CD4-positive, alpha-beta memory T cell (primary cell): ENCODE measurements at regions of chr3 and their contacts with region 1.

Region 1: GRCh38 chr3:37974121-37975083 is 16.2 kb upstream of the VILL start:
- DNase-seq: peak; percentile 62 to 73 (median 69)
- H3K4me3 ChIP-seq: no peak overlapping the region
- H3K4me3 Mint-ChIP-seq: no peak overlapping the region
- H3K27ac ChIP-seq: no peak overlapping the region
- H3K27ac Mint-ChIP-seq: peak overlapping the region in 3 of 7 donors; percentile 59 to 84 (median 81)
- H3K4me1 ChIP-seq: no peaks in the 10 kb centered on the region
- H3K4me1 Mint-ChIP-seq: peaks cover 3 to 5% (median 4%) of the 10 kb centered on the region in 4 donors
- H3K27me3 ChIP-seq: no peaks in the 10 kb centered on the region
- H3K27me3 Mint-ChIP-seq: peaks cover 0 to 2% of the 10 kb centered on the region in 2 donors

Region 2: DNA sequence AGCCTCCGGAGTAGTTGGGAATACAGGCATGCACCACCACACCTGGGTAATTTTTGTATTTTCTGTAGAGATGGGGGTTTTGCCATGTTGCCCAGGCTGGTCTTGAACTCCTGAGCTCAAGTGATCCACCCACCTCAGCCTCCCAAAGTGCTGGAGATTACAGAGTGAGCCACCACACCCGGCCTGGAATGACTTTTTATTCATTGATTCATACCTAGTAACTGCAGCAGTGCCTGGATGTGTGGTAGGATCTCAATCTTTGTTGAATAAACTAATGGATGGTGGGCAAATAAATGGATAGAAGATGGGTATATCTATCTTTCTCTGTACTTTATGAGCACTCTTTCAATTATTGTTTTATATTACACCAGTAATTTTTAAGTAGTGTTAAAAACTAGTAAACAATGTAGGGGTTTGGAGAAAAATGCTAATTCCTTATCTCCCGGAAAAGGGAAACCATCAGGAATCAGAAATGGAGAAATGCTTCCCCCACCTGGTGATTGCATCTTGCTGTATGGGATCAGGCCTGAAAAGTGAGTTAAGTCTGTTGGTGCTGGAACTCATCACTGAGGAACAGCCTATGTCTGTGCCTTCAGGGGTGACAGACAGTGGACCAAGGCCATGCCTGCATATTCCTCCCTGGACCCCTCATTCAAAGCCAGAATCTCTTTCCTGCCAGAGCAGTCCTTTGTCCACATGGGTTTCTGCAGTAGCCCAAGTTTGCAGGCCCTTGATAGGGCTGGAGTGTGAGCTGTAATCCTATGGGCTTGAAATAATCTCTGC is 273.7 kb before region 1 on chr3:
- CTCF ChIA-PET with region 1: no interaction called
- POLR2A ChIA-PET with region 1: no interaction called
- intact Hi-C with region 1: no loop called
- DNase-seq: no peak
- H3K4me3 ChIP-seq: no peak overlapping the region
- H3K4me3 Mint-ChIP-seq: no peak overlapping the region
- H3K27ac ChIP-seq: no peak overlapping the region
- H3K27ac Mint-ChIP-seq: no peak overlapping the region
- H3K4me1 ChIP-seq: no peaks in the 10 kb centered on the region
- H3K4me1 Mint-ChIP-seq: no peaks in the 10 kb centered on the region
- H3K27me3 ChIP-seq: no peaks in the 10 kb centered on the region
- H3K27me3 Mint-ChIP-seq: peaks cover 11 to 12% of the 10 kb centered on the region in 2 donors

Region 3: DNA sequence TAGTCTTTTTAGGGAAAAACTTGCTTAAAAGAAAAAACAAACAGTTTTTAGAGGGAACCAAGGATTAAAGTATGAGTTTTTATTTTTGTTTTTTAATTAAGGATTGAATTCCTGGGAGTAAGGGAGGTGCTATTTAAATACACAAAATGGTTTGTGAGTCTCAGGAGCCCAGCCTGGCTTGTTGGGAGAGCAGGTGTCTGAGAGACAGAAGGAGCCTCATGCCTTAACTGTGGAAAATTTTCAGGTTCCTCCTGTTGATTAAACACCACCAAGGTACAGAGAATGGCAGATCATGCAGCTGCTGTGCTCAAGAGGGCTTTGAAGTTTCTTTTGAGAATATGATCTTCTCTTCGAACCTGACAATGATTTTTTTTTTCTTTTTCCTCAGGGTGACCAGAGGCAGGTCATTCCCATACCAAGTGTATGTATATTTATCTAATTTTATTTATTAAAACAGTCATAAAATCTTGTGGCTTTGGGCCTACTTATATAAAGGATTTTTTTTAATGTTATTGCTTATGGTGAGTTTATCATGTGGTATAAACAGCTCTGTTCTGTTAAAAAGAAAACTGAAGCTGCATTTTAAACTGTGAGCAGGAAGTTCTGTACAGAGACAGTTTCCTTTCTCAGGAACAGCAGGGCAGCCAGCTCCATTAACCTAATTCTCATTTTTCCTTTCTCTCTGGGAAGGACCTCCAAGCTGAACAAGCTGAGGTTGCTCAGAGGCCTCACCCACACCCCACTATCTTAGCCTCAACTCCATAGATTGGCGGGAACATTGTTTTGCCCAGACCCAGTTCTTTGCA is 17.5 kb before region 1 on chr3:
- CTCF ChIA-PET with region 1: interaction called, 59 read pairs
- POLR2A ChIA-PET with region 1: no interaction called
- intact Hi-C with region 1: no loop called
- DNase-seq: peak in 2 of 5 donors; percentile 5 to 10
- H3K4me3 ChIP-seq: no peak overlapping the region
- H3K4me3 Mint-ChIP-seq: peak overlapping the region in 5 of 8 donors; percentile 21 to 69 (median 52)
- H3K27ac ChIP-seq: no peak overlapping the region
- H3K27ac Mint-ChIP-seq: peak overlapping the region; percentile 68 to 93 (median 88)
- H3K4me1 ChIP-seq: peaks cover 15% of the 10 kb centered on the region
- H3K4me1 Mint-ChIP-seq: peaks cover 13 to 30% (median 19%) of the 10 kb centered on the region in 4 donors
- H3K27me3 ChIP-seq: no peaks in the 10 kb centered on the region
- H3K27me3 Mint-ChIP-seq: no peaks in the 10 kb centered on the region

Region 4: DNA sequence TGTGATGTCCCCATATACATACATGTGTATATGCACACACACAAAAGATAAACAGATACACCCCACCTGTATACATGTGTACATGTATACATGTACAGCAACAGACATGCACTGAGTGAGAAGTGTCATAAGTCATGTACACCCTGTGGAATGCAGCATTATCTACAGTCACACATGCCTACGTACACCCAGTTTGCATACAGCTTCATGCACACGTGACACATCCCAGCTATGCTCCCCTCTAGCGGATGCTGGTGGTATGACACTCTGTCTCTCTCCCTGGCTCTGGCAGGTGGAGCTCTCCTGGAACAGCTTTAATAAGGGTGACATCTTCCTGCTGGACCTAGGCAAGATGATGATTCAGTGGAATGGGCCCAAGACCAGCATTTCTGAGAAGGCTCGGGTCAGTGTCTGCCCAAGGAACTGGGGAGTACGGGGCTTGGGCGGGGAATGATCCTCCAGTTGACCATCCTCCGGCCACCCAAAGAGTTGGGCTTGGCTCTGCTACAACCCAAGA is 22.4 kb after region 1 on chr3:
- CTCF ChIA-PET with region 1: interaction called, 146 read pairs
- POLR2A ChIA-PET with region 1: interaction called, 14 read pairs
- intact Hi-C with region 1: no loop called
- DNase-seq: peak; percentile 80 to 85 (median 82)
- H3K4me3 ChIP-seq: no peak overlapping the region
- H3K4me3 Mint-ChIP-seq: peak overlapping the region; percentile 45 to 97 (median 68)
- H3K27ac ChIP-seq: peak overlapping the region; percentile 29
- H3K27ac Mint-ChIP-seq: peak overlapping the region; percentile 87 to 98 (median 96)
- H3K4me1 ChIP-seq: peaks cover 60% of the 10 kb centered on the region
- H3K4me1 Mint-ChIP-seq: peaks cover 53 to 78% (median 63%) of the 10 kb centered on the region in 4 donors
- H3K27me3 ChIP-seq: no peaks in the 10 kb centered on the region
- H3K27me3 Mint-ChIP-seq: no peaks in the 10 kb centered on the region

Region 5: GRCh38 chr3:38039101-38039898 is 64.9 kb after region 1 on chr3 and contains the start of gene DLEC1:
- CTCF ChIA-PET with region 1: interaction called, 29 read pairs
- POLR2A ChIA-PET with region 1: interaction called, 7 read pairs
- intact Hi-C with region 1: loop called (anchors 1 kb)
- DNase-seq: peak; percentile 88 to 93 (median 91)
- H3K4me3 ChIP-seq: peak within 1 kb of the TSS; percentile 44 to 78
- H3K4me3 Mint-ChIP-seq: peak within 1 kb of the TSS; percentile 57 to 94 (median 85)
- H3K27ac ChIP-seq: peak within 1 kb of the TSS; percentile 85
- H3K27ac Mint-ChIP-seq: peak within 1 kb of the TSS; percentile 90 to 99 (median 97)
- H3K4me1 ChIP-seq: peaks cover 38% of the 10 kb centered on the region
- H3K4me1 Mint-ChIP-seq: peaks cover 23 to 45% (median 32%) of the 10 kb centered on the region in 4 donors
- H3K27me3 ChIP-seq: no peaks in the 10 kb centered on the region
- H3K27me3 Mint-ChIP-seq: no peaks in the 10 kb centered on the region
- total RNA-seq, gene DLEC1: 13.2 to 15.1 TPM

Region 6: GRCh38 chr3:38297947-38298711 is 323.7 kb after region 1 on chr3:
- CTCF ChIA-PET with region 1: interaction called, 18 read pairs
- POLR2A ChIA-PET with region 1: no interaction called
- intact Hi-C with region 1: no loop called
- DNase-seq: peak in 2 of 5 donors; percentile 6 to 11
- H3K4me3 ChIP-seq: no peak overlapping the region
- H3K4me3 Mint-ChIP-seq: no peak overlapping the region
- H3K27ac ChIP-seq: no peak overlapping the region
- H3K27ac Mint-ChIP-seq: no peak overlapping the region
- H3K4me1 ChIP-seq: no peaks in the 10 kb centered on the region
- H3K4me1 Mint-ChIP-seq: peaks cover 0 to 1% (median 0%) of the 10 kb centered on the region in 4 donors
- H3K27me3 ChIP-seq: no peaks in the 10 kb centered on the region
- H3K27me3 Mint-ChIP-seq: peaks cover 4 to 14% of the 10 kb centered on the region in 2 donors

Region 7: GRCh38 chr3:38479431-38480092 is 505.2 kb after region 1 on chr3:
- CTCF ChIA-PET with region 1: interaction called, 5 read pairs
- POLR2A ChIA-PET with region 1: no interaction called
- intact Hi-C with region 1: loop called (anchors 1 kb)
- DNase-seq: peak in 4 of 5 donors; percentile 46 to 58 (median 48)
- H3K4me3 ChIP-seq: no peak overlapping the region
- H3K4me3 Mint-ChIP-seq: no peak overlapping the region
- H3K27ac ChIP-seq: no peak overlapping the region
- H3K27ac Mint-ChIP-seq: peak overlapping the region in 2 of 7 donors; percentile 3 to 9
- H3K4me1 ChIP-seq: no peaks in the 10 kb centered on the region
- H3K4me1 Mint-ChIP-seq: peaks cover 0 to 12% (median 3%) of the 10 kb centered on the region in 4 donors
- H3K27me3 ChIP-seq: no peaks in the 10 kb centered on the region
- H3K27me3 Mint-ChIP-seq: no peaks in the 10 kb centered on the region